HEK293T (cell line): ENCODE measurements at regions of chr1 and their contacts with region 1.

Region 1: GRCh38 chr1:174800216-174800851 is 199.4 kb upstream of the CACYBP start:
- DNase-seq: no peak

Region 2: GRCh38 chr1:174726167-174726879 is 74.0 kb before region 1 on chr1:
- CTCF ChIA-PET with region 1: no interaction called
- POLR2A ChIA-PET with region 1: no interaction called
- DNase-seq: peak; percentile 10

Region 3: DNA sequence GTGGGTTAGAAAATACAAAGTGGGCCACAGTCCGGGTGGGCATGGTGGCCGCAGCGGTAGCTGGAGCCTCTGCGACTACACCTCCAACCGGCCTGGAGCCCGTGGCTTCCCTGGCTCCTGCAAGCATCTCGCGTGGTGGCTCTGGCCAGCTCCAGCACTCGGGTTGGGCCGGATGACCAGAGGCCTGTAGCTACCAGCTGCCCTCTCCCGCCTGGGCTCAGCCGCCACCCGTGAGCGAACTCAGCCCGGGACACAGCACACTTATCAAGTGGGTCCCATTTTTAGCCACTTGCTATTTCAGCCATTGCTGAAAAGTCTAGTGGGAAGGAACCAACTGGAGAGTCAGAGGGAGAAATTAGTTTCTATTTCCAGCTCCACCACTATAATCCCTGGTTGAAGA is 91.7 kb after region 1 on chr1:
- CTCF ChIA-PET with region 1: no interaction called
- POLR2A ChIA-PET with region 1: no interaction called
- DNase-seq: no peak

Region 4: GRCh38 chr1:174999216-174999925 is 199.0 kb after region 1 on chr1:
- CTCF ChIA-PET with region 1: no interaction called
- POLR2A ChIA-PET with region 1: interaction called, 16 read pairs
- DNase-seq: peak; percentile 94